Activated naive CD4-positive, alpha-beta T cell treated with anti-CD3 and anti-CD28 coated beads for 36 hours (primary cell): ENCODE measurements at regions of chr4 and their contacts with region 1.

Region 1: DNA sequence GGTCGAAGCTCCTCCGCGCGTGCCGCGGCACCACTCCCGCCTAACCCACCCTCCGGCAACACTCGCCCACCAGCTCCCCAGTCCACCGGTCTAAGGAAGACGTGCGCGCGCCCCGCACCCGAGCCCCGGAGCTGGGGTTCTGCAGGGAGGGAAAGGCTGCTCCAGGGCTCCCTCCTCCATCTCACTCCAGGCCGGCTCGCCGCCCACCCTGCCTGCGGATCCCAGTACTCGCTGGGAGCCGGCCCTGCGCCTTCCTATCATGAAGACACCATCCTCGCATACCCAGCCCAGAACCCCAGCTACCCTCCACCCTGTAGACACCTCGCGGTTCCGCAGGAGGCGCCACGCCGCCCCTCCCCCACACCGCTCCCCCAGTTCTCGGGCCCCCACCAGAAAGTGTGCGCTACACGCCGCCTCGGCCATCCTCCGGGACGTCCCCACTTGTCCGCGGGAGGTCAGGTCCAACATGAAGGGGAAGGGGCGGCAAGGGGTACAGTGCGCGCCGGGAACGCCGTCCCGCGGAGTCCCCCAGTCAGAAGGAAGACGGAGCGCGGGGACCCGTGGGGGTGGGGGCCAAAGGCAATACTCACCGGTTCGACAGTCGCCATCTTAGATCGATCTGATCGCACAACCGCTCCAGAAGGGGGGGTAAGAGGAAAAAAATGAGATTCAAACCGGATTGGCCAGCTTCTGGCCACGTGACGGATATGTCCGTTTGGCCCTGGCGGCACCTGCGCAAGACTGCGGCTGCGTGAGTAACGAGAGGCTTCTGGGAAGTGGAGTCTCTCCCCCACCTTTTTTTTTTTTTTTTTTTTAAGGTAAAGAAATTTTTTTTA is at the start of gene EIF4E:
- DNase-seq: peak; percentile 98
- H3K4me3 Mint-ChIP-seq: peak within 1 kb of the TSS; percentile 87
- H3K27ac Mint-ChIP-seq: peak within 1 kb of the TSS; percentile 99
- H3K4me1 Mint-ChIP-seq: peaks cover 39% of the 10 kb centered on the region
- H3K27me3 Mint-ChIP-seq: no peaks in the 10 kb centered on the region
- total RNA-seq, gene EIF4E: 104 to 116 TPM

Region 2: DNA sequence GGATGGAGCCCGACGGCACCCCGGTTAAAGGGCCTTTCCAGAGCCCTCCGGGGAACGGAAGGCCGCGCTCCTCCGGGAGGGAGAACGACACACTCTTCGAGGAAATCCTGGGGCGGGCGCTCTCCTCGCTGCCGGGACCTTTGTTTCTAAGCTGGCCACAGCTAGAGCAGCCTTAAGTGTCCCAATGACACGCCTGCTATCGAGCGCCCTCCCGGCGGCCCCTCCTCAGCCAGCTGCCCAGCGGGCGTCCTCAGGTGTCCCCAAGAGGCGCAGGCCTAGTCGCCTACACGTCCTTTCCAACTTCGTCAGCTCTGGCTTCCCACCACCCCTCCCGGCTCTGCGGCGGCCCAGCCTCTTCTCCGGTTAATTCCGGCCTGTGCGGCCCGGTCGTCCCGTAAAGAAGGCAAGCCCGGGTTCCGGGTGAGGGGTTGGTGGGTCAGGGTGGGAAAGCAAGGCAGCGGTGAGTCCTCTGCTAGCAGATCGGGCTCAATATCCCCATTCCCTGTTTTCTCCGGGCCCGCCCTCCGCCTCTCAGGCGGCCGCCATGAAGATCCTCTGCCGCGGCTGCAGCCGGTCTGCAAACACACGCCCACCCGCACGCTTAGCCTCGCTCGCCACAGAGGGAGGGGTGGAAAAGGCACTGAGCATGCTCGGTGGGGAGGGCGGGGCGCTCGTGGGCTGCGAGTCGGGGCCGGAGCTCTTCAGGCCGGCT is 668.0 kb before region 1 on chr4:
- CTCF ChIA-PET with region 1: no interaction called
- intact Hi-C with region 1: loop called (anchors 1 kb)
- DNase-seq: peak; percentile 95
- H3K4me3 Mint-ChIP-seq: peak overlapping the region; percentile 93
- H3K27ac Mint-ChIP-seq: peak overlapping the region; percentile 94
- H3K4me1 Mint-ChIP-seq: peaks cover 43% of the 10 kb centered on the region
- H3K27me3 Mint-ChIP-seq: no peaks in the 10 kb centered on the region

Region 3: GRCh38 chr4:98482847-98483806 is 445.6 kb before region 1 on chr4:
- CTCF ChIA-PET with region 1: no interaction called
- intact Hi-C with region 1: loop called (anchors 1 kb)
- DNase-seq: peak; percentile 74
- H3K4me3 Mint-ChIP-seq: peak overlapping the region; percentile 45
- H3K27ac Mint-ChIP-seq: peak overlapping the region; percentile 94
- H3K4me1 Mint-ChIP-seq: peaks cover 78% of the 10 kb centered on the region
- H3K27me3 Mint-ChIP-seq: no peaks in the 10 kb centered on the region

Region 4: GRCh38 chr4:98905839-98906238 is 22.9 kb before region 1 on chr4:
- CTCF ChIA-PET with region 1: no interaction called
- intact Hi-C with region 1: no loop called
- DNase-seq: no peak
- H3K4me3 Mint-ChIP-seq: no peak overlapping the region
- H3K27ac Mint-ChIP-seq: no peak overlapping the region
- H3K4me1 Mint-ChIP-seq: peaks cover 59% of the 10 kb centered on the region
- H3K27me3 Mint-ChIP-seq: no peaks in the 10 kb centered on the region

Region 5: GRCh38 chr4:99054428-99054994 is 125.8 kb after region 1 on chr4:
- CTCF ChIA-PET with region 1: interaction called, 5 read pairs
- intact Hi-C with region 1: loop called (anchors 1 kb)
- DNase-seq: no peak
- H3K4me3 Mint-ChIP-seq: no peak overlapping the region
- H3K27ac Mint-ChIP-seq: peak overlapping the region; percentile 50
- H3K4me1 Mint-ChIP-seq: peaks cover 44% of the 10 kb centered on the region
- H3K27me3 Mint-ChIP-seq: no peaks in the 10 kb centered on the region

Region 6: GRCh38 chr4:99504804-99505569 is 576.3 kb after region 1 on chr4:
- CTCF ChIA-PET with region 1: no interaction called
- intact Hi-C with region 1: loop called (anchors 1 kb)
- DNase-seq: no peak
- H3K4me3 Mint-ChIP-seq: no peak overlapping the region
- H3K27ac Mint-ChIP-seq: no peak overlapping the region
- H3K4me1 Mint-ChIP-seq: peaks cover 49% of the 10 kb centered on the region
- H3K27me3 Mint-ChIP-seq: no peaks in the 10 kb centered on the region